H1 (cell line): ENCODE measurements at regions of chr3 and their contacts with region 1.

Region 1: DNA sequence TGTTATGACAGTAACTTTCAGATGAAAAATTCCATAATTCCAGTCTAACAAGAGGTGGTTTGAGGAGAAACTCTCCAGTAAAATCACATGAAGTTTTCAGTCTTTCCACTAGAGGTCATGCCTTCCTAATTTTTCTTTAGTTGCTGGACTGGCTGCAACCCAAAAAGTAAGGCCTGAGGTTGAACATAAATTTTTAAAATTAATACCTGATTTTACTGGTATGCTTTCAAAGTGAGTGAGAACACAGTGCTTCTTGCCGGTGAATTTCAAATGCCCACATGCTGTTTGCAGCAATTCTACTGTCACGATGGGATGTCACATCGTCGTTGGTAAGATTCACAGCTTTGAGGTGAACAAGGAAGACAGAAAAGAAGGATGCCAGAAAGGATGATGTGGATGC is 89.0 kb upstream of the FGF12 start:
- DNase-seq: no peak
- H3K4me3 ChIP-seq: no peak overlapping the region
- H3K27ac ChIP-seq: no peak overlapping the region
- H3K4me1 ChIP-seq: peaks cover 2 to 9% (median 3%) of the 10 kb centered on the region in 4 experiments; a peak in 5 of 7 replicates
- H3K27me3 ChIP-seq: no peaks in the 10 kb centered on the region
- CTCF ChIP-seq: peak in 2 of 3 experiments; percentile 49 to 60; a peak in 3 of 4 replicates
- EP300 ChIP-seq: no peak
- POLR2A ChIP-seq: no peak
- RAD21 ChIP-seq: peak; percentile 84 to 87

Region 2: GRCh38 chr3:192802957-192803899 is 13.1 kb before region 1 on chr3:
- CTCF ChIA-PET with region 1: interaction called, 60 read pairs
- POLR2A ChIA-PET with region 1: interaction called, 3 read pairs
- DNase-seq: no peak
- H3K4me3 ChIP-seq: no peak overlapping the region
- H3K27ac ChIP-seq: no peak overlapping the region
- H3K4me1 ChIP-seq: peaks cover 0 to 3% (median 0%) of the 10 kb centered on the region in 4 experiments; a peak in 1 of 7 replicates
- H3K27me3 ChIP-seq: no peaks in the 10 kb centered on the region
- CTCF ChIP-seq: peak in 2 of 3 experiments; percentile 42 to 51; a peak in 2 of 4 replicates
- EP300 ChIP-seq: no peak
- POLR2A ChIP-seq: no peak
- RAD21 ChIP-seq: peak; percentile 59 to 62

Region 3: DNA sequence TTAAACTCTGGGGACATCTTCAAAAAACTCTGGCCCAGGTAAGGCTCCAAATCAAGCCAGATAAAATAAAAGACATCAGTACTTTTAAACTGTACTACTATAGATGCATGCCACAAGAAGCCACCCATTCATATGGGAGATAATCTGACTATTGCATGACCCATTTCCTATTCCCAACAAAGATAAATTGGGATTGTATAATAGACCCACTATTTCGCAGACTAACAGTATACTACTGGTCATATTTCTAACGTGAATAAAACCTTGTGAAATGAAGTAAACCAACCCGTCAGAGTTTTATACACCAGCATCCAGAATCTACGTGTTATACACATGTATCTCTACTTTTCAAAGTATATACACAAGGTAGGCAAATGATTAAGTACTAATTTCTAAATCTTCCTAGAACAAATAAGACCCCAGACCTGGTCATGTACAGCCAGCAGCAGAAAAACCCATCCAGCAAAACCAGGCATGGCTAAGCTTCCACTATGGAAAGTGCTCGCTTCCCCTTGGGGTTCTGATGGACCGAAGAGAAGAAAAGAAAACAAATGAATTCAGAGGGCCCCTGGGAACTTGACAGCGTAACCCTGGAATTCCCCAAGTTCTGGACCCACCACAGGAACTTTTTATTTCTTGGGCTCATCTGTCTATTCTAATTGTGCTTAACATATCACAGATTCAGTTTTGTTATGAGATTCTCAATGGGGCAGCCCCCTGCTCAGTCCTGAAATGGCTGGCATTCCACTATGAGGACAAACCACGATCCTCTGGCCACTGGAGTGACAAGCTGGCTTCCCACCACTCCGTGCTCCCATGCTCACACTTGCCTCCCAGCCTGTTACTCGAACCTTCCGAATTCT is 32.3 kb after region 1 on chr3:
- CTCF ChIA-PET with region 1: no interaction called
- POLR2A ChIA-PET with region 1: no interaction called
- DNase-seq: no peak
- H3K4me3 ChIP-seq: no peak overlapping the region
- H3K27ac ChIP-seq: no peak overlapping the region
- H3K4me1 ChIP-seq: peaks cover 2 to 8% (median 4%) of the 10 kb centered on the region in 4 experiments; a peak in 4 of 7 replicates
- H3K27me3 ChIP-seq: no peaks in the 10 kb centered on the region
- CTCF ChIP-seq: no peak
- EP300 ChIP-seq: no peak
- POLR2A ChIP-seq: no peak
- RAD21 ChIP-seq: no peak

Region 4: GRCh38 chr3:192917404-192918274 is 101.3 kb after region 1 on chr3 and contains the start of gene MB21D2:
- CTCF ChIA-PET with region 1: interaction called, 60 read pairs
- POLR2A ChIA-PET with region 1: interaction called, 9 read pairs
- DNase-seq: peak in 1 of 2 experiments; percentile 69
- H3K4me3 ChIP-seq: peak within 1 kb of the TSS; percentile 89 to 98 (median 92)
- H3K27ac ChIP-seq: peak within 1 kb of the TSS; percentile 88
- H3K4me1 ChIP-seq: peaks cover 3 to 26% (median 16%) of the 10 kb centered on the region in 4 experiments; a peak in 5 of 7 replicates
- H3K27me3 ChIP-seq: no peaks in the 10 kb centered on the region; a peak in 1 of 7 replicates
- CTCF ChIP-seq: no peak
- EP300 ChIP-seq: no peak
- POLR2A ChIP-seq: peak; percentile 43 to 67
- RAD21 ChIP-seq: no peak
- total RNA-seq, gene MB21D2: 20.7 and 21.0 TPM in 2 replicates

Region 5: GRCh38 chr3:193030276-193030675 is 213.9 kb after region 1 on chr3:
- CTCF ChIA-PET with region 1: interaction called, 12 read pairs
- POLR2A ChIA-PET with region 1: no interaction called
- DNase-seq: no peak
- H3K4me3 ChIP-seq: no peak overlapping the region
- H3K27ac ChIP-seq: no peak overlapping the region
- H3K4me1 ChIP-seq: peaks cover 0 to 6% (median 0%) of the 10 kb centered on the region in 4 experiments; a peak in 2 of 7 replicates
- H3K27me3 ChIP-seq: no peaks in the 10 kb centered on the region
- CTCF ChIP-seq: no peak
- EP300 ChIP-seq: no peak
- POLR2A ChIP-seq: no peak
- RAD21 ChIP-seq: no peak

Region 6: GRCh38 chr3:193114431-193115340 is 298.3 kb after region 1 on chr3:
- CTCF ChIA-PET with region 1: interaction called, 12 read pairs
- POLR2A ChIA-PET with region 1: no interaction called
- DNase-seq: no peak
- H3K4me3 ChIP-seq: no peak overlapping the region
- H3K27ac ChIP-seq: no peak overlapping the region
- H3K4me1 ChIP-seq: peaks cover 0 to 5% (median 1%) of the 10 kb centered on the region in 4 experiments; a peak in 1 of 7 replicates
- H3K27me3 ChIP-seq: no peaks in the 10 kb centered on the region
- CTCF ChIP-seq: no peak
- EP300 ChIP-seq: no peak
- POLR2A ChIP-seq: no peak
- RAD21 ChIP-seq: no peak

Region 7: DNA sequence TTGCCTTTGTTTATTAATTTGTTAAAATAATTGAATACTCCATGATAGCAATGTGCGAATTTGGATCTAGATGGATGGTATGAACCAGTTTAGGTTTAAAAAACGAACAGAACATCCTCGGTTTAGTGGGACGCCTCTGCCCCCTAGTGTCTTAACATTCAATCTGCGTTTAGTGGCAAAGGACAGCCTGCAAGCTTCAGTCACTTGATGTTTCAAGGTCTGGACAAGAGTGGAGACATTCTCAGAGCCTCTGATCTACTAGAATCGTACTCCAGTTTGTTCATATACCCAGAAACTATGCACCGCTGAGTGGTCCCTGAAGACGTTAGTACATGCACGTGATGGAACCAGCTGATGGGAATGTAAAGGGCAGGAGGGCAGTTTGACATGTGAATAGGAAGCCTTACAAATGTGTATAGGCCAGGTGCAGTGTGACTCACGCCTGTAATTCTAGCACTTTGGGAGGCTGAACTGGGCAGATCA is 756.1 kb after region 1 on chr3:
- CTCF ChIA-PET with region 1: interaction called, 26 read pairs
- POLR2A ChIA-PET with region 1: no interaction called
- DNase-seq: peak in 1 of 2 experiments; percentile 70
- H3K4me3 ChIP-seq: no peak overlapping the region
- H3K27ac ChIP-seq: no peak overlapping the region
- H3K4me1 ChIP-seq: no peaks in the 10 kb centered on the region; a peak in 1 of 7 replicates
- H3K27me3 ChIP-seq: no peaks in the 10 kb centered on the region
- CTCF ChIP-seq: peak; percentile 45 to 94 (median 80)
- EP300 ChIP-seq: no peak
- POLR2A ChIP-seq: no peak
- RAD21 ChIP-seq: peak; percentile 96